ENCODE measurements at regions of chr2 and their contacts with region 1.

Region 1: GRCh38 chr2:11124503-11125068 is 30.7 kb upstream of the SLC66A3 start:
- DNase-seq: peak in 3 of 4 donors; percentile 58 to 85 (median 58)
- ATAC-seq: peak; percentile 87
- H3K4me3 ChIP-seq: no peak overlapping the region
- H3K27ac ChIP-seq: no peak overlapping the region
- H3K4me1 ChIP-seq: peaks cover 0 to 12% of the 10 kb centered on the region in 2 donors
- H3K27me3 ChIP-seq: peaks cover 0 to 9% of the 10 kb centered on the region in 2 donors
- CTCF ChIP-seq: peak; percentile 68 to 74

Region 2: GRCh38 chr2:10832203-10832936 is 292.2 kb before region 1 on chr2:
- intact Hi-C with region 1: loop called in 1 of 2 experiments (anchors 5 kb)
- DNase-seq: peak; percentile 73 to 94 (median 84)
- ATAC-seq: peak; percentile 95
- H3K4me3 ChIP-seq: no peak overlapping the region
- H3K27ac ChIP-seq: no peak overlapping the region
- H3K4me1 ChIP-seq: peaks cover 0 to 3% of the 10 kb centered on the region in 2 donors
- H3K27me3 ChIP-seq: peaks cover 4 to 84% of the 10 kb centered on the region in 2 donors
- CTCF ChIP-seq: peak; percentile 98

Measured in left lung (tissue), 14 donors.